MCF 10A (cell line): ENCODE measurements at regions of chr21 and their contacts with region 1.

Region 1: GRCh38 chr21:23968722-23969647 is 1638.3 kb downstream of the MRPL39 start:
- DNase-seq: peak; percentile 68
- H3K4me3 Mint-ChIP-seq: no peak overlapping the region
- H3K27ac Mint-ChIP-seq: peak overlapping the region; percentile 40
- H3K4me1 Mint-ChIP-seq: peaks cover 10% of the 10 kb centered on the region
- H3K27me3 Mint-ChIP-seq: no peaks in the 10 kb centered on the region
- CTCF ChIP-seq: peak; percentile 73

Region 2: GRCh38 chr21:23445307-23445706 is 523.7 kb before region 1 on chr21:
- CTCF ChIA-PET with region 1: no interaction called
- POLR2A ChIA-PET with region 1: no interaction called
- intact Hi-C with region 1: no loop called
- DNase-seq: no peak
- H3K4me3 Mint-ChIP-seq: no peak overlapping the region
- H3K27ac Mint-ChIP-seq: no peak overlapping the region
- H3K4me1 Mint-ChIP-seq: no peaks in the 10 kb centered on the region
- H3K27me3 Mint-ChIP-seq: no peaks in the 10 kb centered on the region
- CTCF ChIP-seq: no peak

Region 3: GRCh38 chr21:23853796-23854379 is 115.1 kb before region 1 on chr21:
- CTCF ChIA-PET with region 1: interaction called, 30 read pairs
- POLR2A ChIA-PET with region 1: no interaction called
- intact Hi-C with region 1: loop called (anchors 1 kb)
- DNase-seq: peak; percentile 52
- H3K4me3 Mint-ChIP-seq: no peak overlapping the region
- H3K27ac Mint-ChIP-seq: no peak overlapping the region
- H3K4me1 Mint-ChIP-seq: peaks cover 5% of the 10 kb centered on the region
- H3K27me3 Mint-ChIP-seq: no peaks in the 10 kb centered on the region
- CTCF ChIP-seq: peak; percentile 44

Region 4: GRCh38 chr21:24272521-24272938 is 303.5 kb after region 1 on chr21:
- CTCF ChIA-PET with region 1: no interaction called
- POLR2A ChIA-PET with region 1: no interaction called
- intact Hi-C with region 1: no loop called
- DNase-seq: no peak
- H3K4me3 Mint-ChIP-seq: no peak overlapping the region
- H3K27ac Mint-ChIP-seq: no peak overlapping the region
- H3K4me1 Mint-ChIP-seq: peaks cover 20% of the 10 kb centered on the region
- H3K27me3 Mint-ChIP-seq: no peaks in the 10 kb centered on the region
- CTCF ChIP-seq: no peak